ENCODE measurements at regions of chr11 and their contacts with region 1.

Region 1: GRCh38 chr11:118163494-118163893 is 10.9 kb upstream of the SCN4B start:
- DNase-seq: no peak
- ATAC-seq: no peak
- H3K4me3 Mint-ChIP-seq: no peak overlapping the region
- H3K27ac Mint-ChIP-seq: no peak overlapping the region
- H3K4me1 Mint-ChIP-seq: peaks cover 8% of the 10 kb centered on the region; the same call in 1 of the 2 replicates
- H3K27me3 Mint-ChIP-seq: peaks cover 30% of the 10 kb centered on the region
- CTCF ChIP-seq: no peak

Region 2: DNA sequence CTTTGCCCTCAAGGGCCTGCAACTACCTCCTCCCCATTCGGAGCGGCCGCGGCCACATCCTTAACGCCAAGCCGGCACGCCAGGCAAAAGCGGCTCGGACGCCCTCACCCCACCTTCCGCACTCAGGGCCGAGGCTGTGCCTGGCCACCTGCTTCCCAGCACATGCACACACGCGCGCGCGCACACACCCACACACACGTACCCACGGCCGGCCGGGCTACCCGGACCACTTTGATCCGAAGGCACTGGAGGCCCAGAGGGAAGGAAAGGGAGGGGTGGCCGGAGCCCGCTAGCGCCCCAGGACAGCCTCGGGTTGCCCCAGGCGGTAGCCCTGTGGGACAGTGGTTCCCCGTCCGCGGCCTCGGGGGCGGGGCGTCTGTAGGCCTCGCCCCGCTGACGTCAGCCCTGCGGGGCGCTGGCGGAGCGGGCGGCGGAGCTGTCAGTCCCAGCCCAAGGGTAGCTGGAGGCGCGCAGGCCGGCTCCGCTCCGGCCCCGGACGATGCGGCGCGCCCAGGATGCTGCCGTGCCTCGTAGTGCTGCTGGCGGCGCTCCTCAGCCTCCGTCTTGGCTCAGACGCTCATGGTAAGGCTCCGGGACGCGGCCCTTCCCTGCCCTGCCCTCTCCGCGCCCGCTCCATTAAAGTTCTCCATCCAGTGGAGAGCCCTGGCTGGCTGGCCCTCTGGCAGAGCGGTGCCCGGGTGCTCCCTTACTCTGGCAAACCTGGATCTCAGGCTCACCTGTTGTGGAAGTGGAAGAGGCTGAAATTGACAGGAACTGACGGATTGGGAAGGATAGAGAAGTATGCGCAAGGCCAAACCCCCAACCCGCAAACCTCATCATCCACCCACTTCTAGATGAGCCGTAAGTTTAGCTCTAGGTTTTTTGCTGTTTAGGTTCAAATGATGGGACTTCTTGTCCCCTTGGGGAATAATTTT is 177.3 kb before region 1 on chr11 and contains the start of gene IL10RA:
- CTCF ChIA-PET with region 1: no interaction called
- POLR2A ChIA-PET with region 1: interaction called, 12 read pairs
- DNase-seq: peak; percentile 89
- ATAC-seq: peak; percentile 96
- H3K4me3 Mint-ChIP-seq: peak within 1 kb of the TSS; percentile 84
- H3K27ac Mint-ChIP-seq: no peak within 1 kb of the TSS
- H3K4me1 Mint-ChIP-seq: peaks cover 9% of the 10 kb centered on the region
- H3K27me3 Mint-ChIP-seq: peaks cover 58% of the 10 kb centered on the region
- CTCF ChIP-seq: no peak
- total RNA-seq, gene IL10RA: 0.41 to 0.74 TPM (median 0.71 TPM) in 3 replicates

Region 3: DNA sequence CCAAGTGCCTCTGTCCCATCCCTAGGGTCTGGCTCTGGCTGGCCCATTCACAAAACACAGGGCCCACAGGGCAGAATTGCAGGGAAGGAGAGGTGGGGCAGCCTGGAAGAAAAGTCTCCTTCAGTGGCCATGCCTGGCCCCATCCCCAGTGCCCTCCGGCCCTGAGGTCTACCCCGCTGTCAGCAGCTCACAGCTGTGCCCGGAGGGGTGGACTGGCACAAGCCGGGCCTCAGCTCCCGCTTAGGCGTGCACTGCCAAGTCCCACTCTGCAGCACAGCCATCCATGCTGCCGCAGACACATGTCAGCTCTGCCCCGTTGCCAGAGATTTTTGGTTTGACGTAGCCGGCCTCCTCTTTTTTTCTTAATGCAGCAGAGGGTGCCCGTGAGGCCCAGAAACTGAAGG is 16.8 kb after region 1 on chr11:
- CTCF ChIA-PET with region 1: no interaction called
- POLR2A ChIA-PET with region 1: no interaction called
- DNase-seq: peak; percentile 64
- ATAC-seq: peak; percentile 85
- H3K4me3 Mint-ChIP-seq: peak overlapping the region; percentile 50
- H3K27ac Mint-ChIP-seq: no peak overlapping the region
- H3K4me1 Mint-ChIP-seq: peaks cover 33% of the 10 kb centered on the region
- H3K27me3 Mint-ChIP-seq: peaks cover 15% of the 10 kb centered on the region
- CTCF ChIP-seq: no peak